ENCODE measurements at regions of chr14 and their contacts with region 1.

Region 1: DNA sequence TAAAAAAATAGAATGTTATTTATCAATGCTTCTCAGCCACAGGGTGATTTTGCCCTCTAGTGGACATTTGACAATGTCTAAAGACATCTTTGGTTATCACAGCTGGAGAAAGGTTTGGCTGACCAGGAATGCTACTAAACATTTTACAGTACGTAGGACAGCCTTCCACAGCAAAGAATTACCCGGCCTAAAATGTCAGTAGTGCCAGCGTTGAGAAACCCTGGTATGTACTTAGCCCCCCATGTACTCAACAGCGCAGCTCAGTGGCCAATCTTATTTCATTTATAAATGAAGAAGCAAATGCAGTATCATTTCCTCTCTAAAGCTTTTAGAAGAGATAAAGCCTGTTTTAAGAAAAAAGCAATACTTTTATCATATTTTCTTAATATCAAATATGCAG is 5.8 kb downstream of the MARK3 start:
- DNase-seq: peak; percentile 67
- H3K4me3 Mint-ChIP-seq: no peak overlapping the region
- H3K27ac Mint-ChIP-seq: peak overlapping the region; percentile 19
- H3K4me1 Mint-ChIP-seq: peaks cover 58% of the 10 kb centered on the region
- H3K27me3 Mint-ChIP-seq: no peaks in the 10 kb centered on the region

Region 2: DNA sequence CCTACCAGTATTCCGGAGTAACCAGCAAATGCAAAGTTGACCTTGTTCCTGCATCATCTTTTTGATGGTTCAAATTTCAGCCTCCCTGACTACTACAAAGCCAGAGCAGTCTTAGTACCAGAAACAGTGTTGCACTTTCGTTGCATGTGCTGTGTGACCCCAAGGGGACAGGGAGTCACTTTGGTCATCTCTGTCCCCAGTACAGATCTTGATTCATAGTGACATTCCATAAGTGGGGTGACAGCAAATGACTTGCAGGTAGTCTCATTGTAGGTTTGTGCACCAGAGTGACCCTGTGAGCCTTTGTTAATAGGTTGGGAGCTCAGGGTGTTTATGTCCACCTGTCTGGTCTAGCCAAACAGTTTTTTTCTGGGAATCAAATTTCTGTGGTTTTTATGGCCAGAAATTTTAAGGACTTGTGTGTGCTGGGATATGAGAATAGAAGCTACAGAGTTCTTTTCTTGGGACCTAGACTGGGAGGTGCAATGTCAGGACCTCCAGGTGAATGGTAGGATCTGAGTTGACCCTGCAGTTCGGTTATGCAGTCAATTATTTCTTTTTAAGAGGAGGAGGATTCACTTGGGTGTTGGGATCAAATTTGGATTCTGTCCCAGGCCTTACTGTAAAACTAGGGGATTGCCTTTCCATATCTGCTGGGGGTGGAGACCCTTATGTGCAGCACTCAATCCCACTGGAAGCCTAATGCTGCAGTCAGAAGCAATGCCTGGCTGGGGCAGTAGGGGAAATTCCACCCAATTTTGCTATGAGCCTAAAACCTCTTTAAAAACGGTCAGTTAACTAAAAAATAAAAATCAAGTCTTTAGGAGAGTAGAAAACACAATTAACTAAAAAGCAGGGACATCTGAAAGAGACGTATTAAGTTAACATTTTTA is 46.9 kb before region 1 on chr14:
- CTCF ChIA-PET with region 1: interaction called, 10 read pairs
- DNase-seq: no peak
- H3K4me3 Mint-ChIP-seq: no peak overlapping the region
- H3K27ac Mint-ChIP-seq: no peak overlapping the region
- H3K4me1 Mint-ChIP-seq: peaks cover 6% of the 10 kb centered on the region
- H3K27me3 Mint-ChIP-seq: no peaks in the 10 kb centered on the region

Region 3: DNA sequence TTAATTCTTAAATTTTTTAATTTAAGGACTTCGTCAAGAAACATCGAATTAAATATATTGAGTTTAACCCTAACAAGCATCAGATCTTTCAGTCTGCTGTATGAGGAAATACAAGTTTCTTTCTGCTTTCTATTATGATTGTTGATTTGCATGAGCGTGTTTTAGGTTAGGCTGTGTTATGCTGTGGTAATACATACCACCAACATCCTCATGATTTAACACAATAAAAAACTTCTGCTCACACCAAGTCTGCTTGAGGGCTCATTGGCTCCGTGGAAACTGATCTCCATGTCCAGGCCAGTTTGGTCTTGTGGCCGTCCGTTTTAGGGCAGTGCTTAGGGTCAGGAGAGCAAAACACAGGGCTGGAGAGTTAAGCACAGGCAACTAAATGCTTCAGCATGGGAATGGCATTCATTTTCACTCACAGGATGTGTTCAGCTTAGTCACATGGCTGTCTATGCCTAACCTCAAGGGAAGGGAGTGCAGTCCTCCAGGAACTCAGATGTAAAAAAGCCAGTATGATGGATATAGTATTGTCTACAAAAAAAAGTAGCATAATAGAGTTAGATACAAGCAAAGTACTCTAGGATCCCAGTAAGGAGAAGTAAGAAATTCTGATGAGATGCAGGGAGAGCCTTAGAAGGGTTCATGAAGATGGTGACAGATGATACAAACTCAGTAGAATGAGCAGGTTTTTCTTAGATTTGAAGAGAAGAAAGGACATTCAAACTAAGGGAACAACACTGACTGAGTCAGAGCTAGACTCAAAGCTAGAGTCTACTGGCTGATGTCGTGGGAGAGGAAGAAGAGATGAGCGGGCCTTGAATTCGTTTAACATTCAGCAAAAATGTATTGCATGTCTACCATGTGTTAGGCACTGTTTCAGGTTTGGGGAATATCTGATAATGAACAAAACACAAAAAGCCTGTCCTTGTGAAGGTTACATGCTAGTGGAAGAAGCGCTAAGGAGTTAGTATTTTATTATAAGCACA is 10.5 kb after region 1 on chr14:
- CTCF ChIA-PET with region 1: interaction called, 54 read pairs
- DNase-seq: no peak
- H3K4me3 Mint-ChIP-seq: no peak overlapping the region
- H3K27ac Mint-ChIP-seq: peak overlapping the region; percentile 81
- H3K4me1 Mint-ChIP-seq: peaks cover 53% of the 10 kb centered on the region
- H3K27me3 Mint-ChIP-seq: no peaks in the 10 kb centered on the region